Activated naive CD4-positive, alpha-beta T cell treated with anti-CD3 and anti-CD28 coated beads, Interleukin-2, amount 10 ng/mL, durations not matched to agents 7 days and 5 days (primary cell): ENCODE measurements at regions of chr13 and their contacts with region 1.

Region 1: DNA sequence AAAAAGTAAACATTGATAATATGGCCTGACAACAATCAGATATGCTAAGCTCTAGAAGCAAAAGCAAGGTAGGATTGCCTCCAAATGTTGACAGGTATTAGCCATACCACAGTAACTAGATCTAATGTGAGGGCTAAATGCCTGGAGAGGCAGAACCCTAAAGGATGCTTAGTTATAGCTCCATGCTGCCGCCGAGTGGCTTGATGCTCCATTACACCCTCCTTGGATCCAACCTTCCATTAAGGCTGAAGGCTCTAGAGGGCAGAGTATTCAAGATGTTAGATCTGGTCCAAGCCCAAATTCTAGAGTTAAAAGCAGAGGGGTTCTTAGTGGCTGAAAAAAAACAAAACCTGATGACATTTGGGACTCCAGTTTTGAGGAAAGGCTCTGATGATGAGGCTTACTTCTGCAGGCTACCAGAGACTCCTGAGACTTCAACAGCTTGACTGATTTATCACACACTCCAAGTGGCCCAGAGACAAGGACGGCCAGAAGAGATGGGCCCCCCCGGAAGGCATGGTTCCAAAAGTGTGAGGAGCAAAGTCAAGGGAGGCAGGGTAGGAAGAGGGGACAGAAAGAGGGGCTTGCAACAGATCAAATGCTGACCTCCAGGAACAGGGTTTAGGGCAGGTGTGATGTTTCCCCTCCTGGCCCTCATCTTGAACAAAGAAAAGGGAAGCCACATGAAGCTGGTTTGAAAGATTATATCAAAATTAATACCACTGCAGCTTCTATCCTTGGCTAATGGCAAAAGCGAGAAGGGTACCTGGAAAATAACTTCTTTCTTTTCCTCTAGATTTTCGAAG is 21.9 kb upstream of the CPB2 start:
- DNase-seq: peak; percentile 78
- H3K4me3 Mint-ChIP-seq: no peak overlapping the region
- H3K27ac Mint-ChIP-seq: peak overlapping the region; percentile 25
- H3K4me1 Mint-ChIP-seq: peaks cover 35% of the 10 kb centered on the region
- H3K27me3 Mint-ChIP-seq: peaks cover 7% of the 10 kb centered on the region

Region 2: DNA sequence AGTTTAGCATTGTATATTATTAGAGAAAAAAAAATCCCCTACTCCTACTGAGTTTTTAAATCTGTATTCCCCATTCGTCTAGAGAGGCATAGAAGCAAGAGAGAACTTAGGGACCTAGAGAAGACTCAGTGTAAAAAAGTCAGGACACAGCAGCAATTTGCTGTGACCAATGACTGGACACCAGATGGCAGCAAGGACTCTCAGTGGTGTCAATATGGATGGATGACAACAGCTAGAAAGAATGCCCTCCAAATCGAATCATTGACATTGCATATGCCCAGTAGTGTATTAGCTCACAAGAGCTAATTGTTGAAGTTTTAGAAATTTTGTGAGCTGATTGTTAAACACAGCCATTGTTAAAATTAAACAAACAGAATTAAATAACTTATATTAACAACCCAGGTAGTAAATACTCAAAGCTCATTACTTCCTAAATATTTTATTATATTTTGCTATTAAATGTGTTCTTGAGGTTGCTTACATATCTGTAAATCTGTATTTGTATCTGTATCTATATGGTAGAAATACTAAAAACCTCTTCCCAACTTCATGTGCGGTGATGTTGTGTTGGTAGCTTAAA is 319.1 kb before region 1 on chr13:
- CTCF ChIA-PET with region 1: interaction called, 15 read pairs
- DNase-seq: peak; percentile 42
- H3K4me3 Mint-ChIP-seq: no peak overlapping the region
- H3K27ac Mint-ChIP-seq: no peak overlapping the region
- H3K4me1 Mint-ChIP-seq: peaks cover 6% of the 10 kb centered on the region
- H3K27me3 Mint-ChIP-seq: no peaks in the 10 kb centered on the region

Region 3: GRCh38 chr13:45966715-45967114 is 160.0 kb before region 1 on chr13:
- CTCF ChIA-PET with region 1: no interaction called
- DNase-seq: no peak
- H3K4me3 Mint-ChIP-seq: no peak overlapping the region
- H3K27ac Mint-ChIP-seq: no peak overlapping the region
- H3K4me1 Mint-ChIP-seq: no peaks in the 10 kb centered on the region
- H3K27me3 Mint-ChIP-seq: no peaks in the 10 kb centered on the region